ENCODE measurements at regions of chr16 and their contacts with region 1.

Region 1: DNA sequence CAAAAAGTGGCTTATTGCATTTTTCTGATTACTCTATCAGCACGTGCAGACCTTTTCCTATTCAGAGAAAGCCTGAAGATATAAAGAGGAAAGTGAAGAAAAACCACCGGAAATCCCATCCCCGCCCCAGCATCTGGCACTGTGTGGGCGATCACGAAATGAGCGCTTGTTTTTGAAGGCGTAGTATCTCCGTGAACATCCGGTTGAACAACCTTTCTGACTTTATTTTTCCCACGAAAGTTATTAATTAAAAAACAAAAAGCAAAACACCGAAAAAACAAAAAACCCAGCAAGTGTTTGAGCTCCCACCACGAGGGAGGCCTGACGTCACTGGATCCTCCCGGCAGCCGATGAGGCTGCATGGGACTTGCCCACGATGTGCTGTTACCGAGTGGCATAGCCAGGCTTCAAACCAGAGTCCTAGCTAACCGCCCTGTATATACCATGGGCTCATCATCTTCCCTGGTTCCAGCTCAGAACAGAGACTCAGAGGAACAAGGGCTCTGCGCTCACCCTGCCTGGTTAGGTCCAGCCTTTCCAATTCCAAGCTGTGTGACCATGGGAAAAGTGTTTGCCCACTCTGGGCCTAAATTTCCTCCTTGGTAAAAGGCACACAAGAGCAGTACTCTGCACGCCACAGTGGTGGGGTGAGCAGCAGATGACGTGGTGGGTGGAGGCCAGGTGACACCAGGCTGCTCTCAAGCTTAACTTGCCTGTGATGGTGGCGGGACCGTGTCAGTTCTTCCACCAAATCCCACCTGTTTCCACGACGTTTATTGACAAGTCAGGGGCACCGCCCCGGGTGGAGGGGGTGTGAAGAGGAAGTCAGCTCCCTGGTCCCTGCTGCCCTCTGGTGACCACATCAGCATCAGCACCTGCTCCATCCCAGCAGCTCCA is 34.3 kb upstream of the IL21R start:
- DNase-seq: peak; percentile 52 to 70
- H3K4me3 ChIP-seq: no peak overlapping the region
- H3K27ac ChIP-seq: no peak overlapping the region
- H3K4me1 ChIP-seq: peaks cover 36% of the 10 kb centered on the region
- H3K27me3 ChIP-seq: no peaks in the 10 kb centered on the region
- CTCF ChIP-seq: peak; percentile 84

Region 2: DNA sequence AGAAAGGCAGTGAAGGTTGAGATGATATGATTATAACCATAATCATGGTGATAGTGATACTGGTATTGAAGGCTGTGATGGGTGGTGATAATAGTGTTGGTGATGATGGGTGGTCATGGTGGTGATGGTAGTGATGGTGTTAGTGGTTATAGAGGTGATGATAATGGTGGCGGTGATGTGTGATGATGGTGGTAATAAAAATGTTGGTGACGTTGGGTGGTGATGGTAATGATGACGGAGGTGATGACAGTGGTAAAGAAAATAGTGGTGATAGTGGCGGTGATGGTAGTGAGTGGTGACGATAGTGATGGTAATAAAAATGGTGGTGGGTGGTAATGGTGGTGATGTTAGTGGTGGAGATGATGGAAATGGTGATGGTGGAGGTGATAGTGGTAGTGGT is 229.4 kb before region 1 on chr16:
- CTCF ChIA-PET with region 1: no interaction called
- POLR2A ChIA-PET with region 1: no interaction called
- intact Hi-C with region 1: no loop called
- DNase-seq: no peak
- H3K4me3 ChIP-seq: no peak overlapping the region
- H3K27ac ChIP-seq: no peak overlapping the region
- H3K4me1 ChIP-seq: no peaks in the 10 kb centered on the region
- H3K27me3 ChIP-seq: peaks cover 73% of the 10 kb centered on the region
- CTCF ChIP-seq: no peak

Region 3: GRCh38 chr16:27154705-27155521 is 212.8 kb before region 1 on chr16:
- CTCF ChIA-PET with region 1: interaction called, 6 read pairs
- POLR2A ChIA-PET with region 1: no interaction called
- intact Hi-C with region 1: loop called (anchors 1 kb)
- DNase-seq: peak in 1 of 2 experiments; percentile 47
- H3K4me3 ChIP-seq: no peak overlapping the region
- H3K27ac ChIP-seq: no peak overlapping the region
- H3K4me1 ChIP-seq: no peaks in the 10 kb centered on the region
- H3K27me3 ChIP-seq: peaks cover 19% of the 10 kb centered on the region; the same call in 1 of the 2 replicates
- CTCF ChIP-seq: peak; percentile 100

Region 4: GRCh38 chr16:27179500-27180072 is 188.1 kb before region 1 on chr16:
- CTCF ChIA-PET with region 1: interaction called, 7 read pairs
- POLR2A ChIA-PET with region 1: no interaction called
- intact Hi-C with region 1: loop called (anchors 1 kb)
- DNase-seq: peak; percentile 55 to 65
- H3K4me3 ChIP-seq: no peak overlapping the region
- H3K27ac ChIP-seq: no peak overlapping the region
- H3K4me1 ChIP-seq: 0 out of 2 replicates have a peak, but pooled peaks cover 1% of the 10 kb centered on the region
- H3K27me3 ChIP-seq: peaks cover 19% of the 10 kb centered on the region; the same call in 1 of the 2 replicates
- CTCF ChIP-seq: peak; percentile 88

Region 5: GRCh38 chr16:27235055-27235937 is 132.4 kb before region 1 on chr16:
- CTCF ChIA-PET with region 1: interaction called, 34 read pairs
- POLR2A ChIA-PET with region 1: no interaction called
- intact Hi-C with region 1: loop called (anchors 1 kb)
- DNase-seq: peak; percentile 58 to 88
- H3K4me3 ChIP-seq: no peak overlapping the region
- H3K27ac ChIP-seq: no peak overlapping the region
- H3K4me1 ChIP-seq: no peaks in the 10 kb centered on the region
- H3K27me3 ChIP-seq: no peaks in the 10 kb centered on the region
- CTCF ChIP-seq: peak; percentile 93

Region 6: GRCh38 chr16:27268376-27269299 is 99.1 kb before region 1 on chr16 and contains the start of gene NSMCE1:
- CTCF ChIA-PET with region 1: no interaction called
- POLR2A ChIA-PET with region 1: no interaction called
- intact Hi-C with region 1: no loop called
- DNase-seq: peak; percentile 90 to 98
- H3K4me3 ChIP-seq: peak within 1 kb of the TSS; percentile 92
- H3K27ac ChIP-seq: peak within 1 kb of the TSS; percentile 78
- H3K4me1 ChIP-seq: peaks cover 43% of the 10 kb centered on the region
- H3K27me3 ChIP-seq: no peaks in the 10 kb centered on the region
- CTCF ChIP-seq: 0 out of 2 replicates have a peak, but pooled peaks have one; percentile 14
- total RNA-seq, gene NSMCE1: 114 and 121 TPM in 2 replicates

Region 7: GRCh38 chr16:27313422-27314160 is 54.1 kb before region 1 on chr16 and contains the start of gene IL4R:
- CTCF ChIA-PET with region 1: no interaction called
- POLR2A ChIA-PET with region 1: no interaction called
- intact Hi-C with region 1: loop called (anchors 2 kb)
- DNase-seq: peak; percentile 72 to 77
- H3K4me3 ChIP-seq: peak within 1 kb of the TSS; percentile 91
- H3K27ac ChIP-seq: peak within 1 kb of the TSS; percentile 98
- H3K4me1 ChIP-seq: peaks cover 46% of the 10 kb centered on the region
- H3K27me3 ChIP-seq: no peaks in the 10 kb centered on the region
- CTCF ChIP-seq: no peak
- total RNA-seq, gene IL4R: 65.3 and 76.5 TPM in 2 replicates

Region 8: GRCh38 chr16:27326738-27327585 is 40.7 kb before region 1 on chr16:
- CTCF ChIA-PET with region 1: no interaction called
- POLR2A ChIA-PET with region 1: no interaction called
- intact Hi-C with region 1: loop called (anchors 1 kb)
- DNase-seq: peak; percentile 97 to 99
- H3K4me3 ChIP-seq: peak overlapping the region; percentile 11; the same call in 1 of the 2 replicates
- H3K27ac ChIP-seq: peak overlapping the region; percentile 98
- H3K4me1 ChIP-seq: peaks cover 60% of the 10 kb centered on the region
- H3K27me3 ChIP-seq: no peaks in the 10 kb centered on the region
- CTCF ChIP-seq: 0 out of 2 replicates have a peak, but pooled peaks have one; percentile 34

Region 9: GRCh38 chr16:27381236-27381635 is 13.5 kb after region 1 on chr16:
- CTCF ChIA-PET with region 1: interaction called, 10 read pairs
- POLR2A ChIA-PET with region 1: no interaction called
- intact Hi-C with region 1: no loop called
- DNase-seq: no peak
- H3K4me3 ChIP-seq: no peak overlapping the region
- H3K27ac ChIP-seq: no peak overlapping the region
- H3K4me1 ChIP-seq: no peaks in the 10 kb centered on the region
- H3K27me3 ChIP-seq: peaks cover 57% of the 10 kb centered on the region
- CTCF ChIP-seq: no peak

Region 10: GRCh38 chr16:27444470-27444869 is 76.8 kb after region 1 on chr16:
- CTCF ChIA-PET with region 1: no interaction called
- POLR2A ChIA-PET with region 1: no interaction called
- intact Hi-C with region 1: no loop called
- DNase-seq: no peak
- H3K4me3 ChIP-seq: no peak overlapping the region
- H3K27ac ChIP-seq: no peak overlapping the region
- H3K4me1 ChIP-seq: no peaks in the 10 kb centered on the region
- H3K27me3 ChIP-seq: no peaks in the 10 kb centered on the region
- CTCF ChIP-seq: no peak

Region 11: GRCh38 chr16:27460213-27460612 is 92.5 kb after region 1 on chr16:
- CTCF ChIA-PET with region 1: no interaction called
- POLR2A ChIA-PET with region 1: no interaction called
- intact Hi-C with region 1: no loop called
- DNase-seq: no peak
- H3K4me3 ChIP-seq: no peak overlapping the region
- H3K27ac ChIP-seq: no peak overlapping the region
- H3K4me1 ChIP-seq: no peaks in the 10 kb centered on the region
- H3K27me3 ChIP-seq: no peaks in the 10 kb centered on the region
- CTCF ChIP-seq: no peak